IMR-90 (cell line): ENCODE measurements at regions of chr4 and their contacts with region 1.

Region 1: GRCh38 chr4:84176016-84176415 is 323.1 kb downstream of the NKX6-1 start:
- DNase-seq: no peak
- ATAC-seq: no peak
- H3K4me3 ChIP-seq: no peak overlapping the region
- H3K27ac ChIP-seq: no peak overlapping the region
- H3K4me1 ChIP-seq: no peaks in the 10 kb centered on the region
- H3K27me3 ChIP-seq: no peaks in the 10 kb centered on the region
- CTCF ChIP-seq: no peak
- POLR2A ChIP-seq: no peak
- RAD21 ChIP-seq: no peak

Region 2: GRCh38 chr4:84050015-84050414 is 126.0 kb before region 1 on chr4:
- CTCF ChIA-PET with region 1: no interaction called
- POLR2A ChIA-PET with region 1: interaction called, 10 read pairs
- dilution Hi-C with region 1: no loop called
- in situ Hi-C with region 1: no loop called
- intact Hi-C with region 1: no loop called
- DNase-seq: no peak
- ATAC-seq: no peak
- H3K4me3 ChIP-seq: no peak overlapping the region
- H3K27ac ChIP-seq: no peak overlapping the region
- H3K4me1 ChIP-seq: no peaks in the 10 kb centered on the region
- H3K27me3 ChIP-seq: no peaks in the 10 kb centered on the region
- CTCF ChIP-seq: no peak
- POLR2A ChIP-seq: no peak
- RAD21 ChIP-seq: no peak